GM18951 (cell line): ENCODE measurements at regions of chr2 and their contacts with region 1.

Region 1: DNA sequence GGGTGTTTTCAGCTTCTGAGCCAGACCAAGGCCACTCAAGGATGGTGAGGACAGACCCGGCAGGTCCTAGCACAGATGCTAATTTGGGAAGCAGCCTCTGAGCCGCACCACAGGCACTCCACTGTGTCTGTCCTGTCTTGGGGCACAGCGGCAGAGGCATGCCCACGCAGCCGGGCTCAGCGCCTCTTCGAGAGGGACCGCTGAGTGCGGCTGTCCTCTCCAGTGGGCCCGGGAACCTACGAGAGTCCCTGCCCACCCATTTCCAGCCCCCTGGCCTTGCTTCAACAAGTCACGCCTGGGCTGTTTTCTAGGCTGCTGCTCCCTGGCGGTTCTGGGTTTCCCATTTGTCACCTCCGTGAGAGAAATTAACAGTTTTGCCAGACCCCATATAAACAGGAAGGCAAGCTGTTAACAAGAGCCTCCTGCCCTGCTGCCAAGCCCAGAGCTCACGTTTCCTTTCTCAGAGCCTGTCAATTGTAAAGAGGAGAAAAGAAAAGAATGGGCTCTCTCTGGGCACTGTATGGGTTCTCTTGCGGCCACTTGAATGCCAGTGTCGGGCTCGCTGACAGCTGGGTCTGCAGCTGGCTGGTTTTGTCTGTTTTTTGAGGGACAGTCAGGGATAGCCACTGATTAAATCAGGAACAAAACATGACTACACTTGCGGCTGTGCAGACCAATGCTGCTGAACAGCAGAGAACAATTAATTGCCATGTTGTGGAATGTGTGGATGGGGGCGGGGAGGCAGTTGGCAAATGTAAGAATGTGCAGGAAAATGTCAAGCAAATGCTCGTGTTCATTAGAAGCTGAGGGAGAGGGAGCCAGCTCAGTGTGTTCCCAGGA is 30.6 kb downstream of the TMEM17 start:
- POLR2A ChIP-seq: no peak

Region 2: DNA sequence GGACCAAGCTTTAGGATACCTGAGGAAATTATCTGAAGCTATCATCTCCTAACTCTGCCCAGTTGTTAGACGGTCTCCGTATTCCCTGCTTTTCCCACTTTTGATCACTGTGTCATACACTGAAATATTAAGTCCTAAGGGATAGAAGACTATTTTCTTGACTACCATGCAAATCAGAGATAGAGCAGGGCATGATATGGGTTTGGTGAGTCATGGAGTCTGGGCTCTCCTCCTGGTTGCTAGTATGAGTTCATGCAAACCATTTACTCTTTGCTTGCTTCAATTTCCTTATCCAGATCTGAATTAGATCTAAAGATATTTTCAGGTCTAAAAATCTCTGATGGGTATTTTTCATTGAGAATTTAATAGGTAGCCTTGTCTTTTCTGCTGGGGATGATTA is 285.2 kb after region 1 on chr2:
- in situ Hi-C with region 1: loop called (anchors 10 kb)
- POLR2A ChIP-seq: no peak